ENCODE measurements at regions of chr3 and their contacts with region 1.

Region 1: DNA sequence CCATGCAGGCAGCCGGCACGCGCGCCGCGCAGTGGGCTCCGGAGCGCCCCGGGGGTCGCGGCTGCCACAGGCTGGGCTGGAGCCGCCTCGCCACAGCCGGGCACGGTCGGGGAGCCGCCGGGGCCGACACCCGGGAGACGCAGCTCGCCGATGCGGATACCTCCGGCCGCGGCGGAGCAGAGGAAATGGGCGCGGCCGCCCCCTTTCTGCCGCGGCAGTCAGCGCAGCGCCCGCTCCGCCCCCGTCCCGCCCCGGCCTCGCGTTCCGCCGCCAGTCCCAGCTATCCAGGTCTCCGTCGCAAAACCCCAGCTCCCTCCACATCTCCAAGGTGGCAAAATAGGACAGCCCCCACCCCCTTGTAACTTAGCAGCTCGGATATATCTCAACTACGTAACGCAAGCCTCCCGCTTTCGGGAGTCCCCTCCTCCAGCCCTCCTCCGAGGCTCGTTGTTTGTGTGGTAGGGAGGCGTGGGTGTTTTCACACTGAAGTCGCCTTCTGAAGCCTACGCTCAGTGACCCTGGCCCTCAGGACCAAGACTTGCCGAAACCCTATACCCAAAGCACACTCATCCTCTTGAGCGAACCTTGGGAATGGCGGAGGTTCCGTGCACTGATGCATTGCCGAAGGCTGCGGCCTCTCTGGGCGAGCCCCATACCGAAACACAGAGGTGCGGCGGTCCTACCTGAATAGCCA is at the start of gene SH3BP5:
- DNase-seq: peak in 1 of 2 experiments; percentile 87
- H3K4me3 ChIP-seq: peak within 1 kb of the TSS; percentile 65 to 92 (median 84)
- H3K27ac ChIP-seq: no peak within 1 kb of the TSS; the same call in 1 of the 2 replicates
- H3K4me1 ChIP-seq: peaks cover 0 to 11% (median 9%) of the 10 kb centered on the region in 4 experiments; a peak in 6 of 7 replicates
- H3K27me3 ChIP-seq: peaks cover 1 to 20% (median 10%) of the 10 kb centered on the region in 4 experiments; a peak in 6 of 7 replicates
- CTCF ChIP-seq: peak; percentile 57 to 72 (median 63)
- EP300 ChIP-seq: no peak
- POLR2A ChIP-seq: no peak
- RAD21 ChIP-seq: peak; percentile 37 to 51
- total RNA-seq, gene SH3BP5: 9.4 and 9.7 TPM in 2 replicates

Region 2: DNA sequence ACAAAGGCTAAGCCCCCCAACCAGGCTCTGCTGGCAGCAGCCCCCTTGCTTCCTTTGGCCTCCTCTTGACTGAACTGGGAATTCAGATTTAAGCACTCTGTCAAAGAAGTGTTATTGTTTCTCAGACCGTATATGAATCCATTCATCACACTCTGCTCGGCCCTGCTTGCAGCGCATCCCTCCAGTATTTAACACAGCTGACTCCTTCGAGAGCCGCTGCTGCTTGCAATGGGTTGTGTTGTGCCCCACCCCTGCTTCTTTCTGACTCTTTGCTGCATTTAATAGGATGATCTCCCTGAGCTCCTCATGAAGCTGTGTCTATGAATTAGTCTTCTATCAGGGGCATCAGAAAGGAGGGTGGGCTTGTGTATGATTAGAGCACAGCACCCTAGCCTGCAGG is 626.5 kb before region 1 on chr3:
- CTCF ChIA-PET with region 1: no interaction called
- POLR2A ChIA-PET with region 1: no interaction called
- DNase-seq: peak in 1 of 2 experiments; percentile 32
- H3K4me3 ChIP-seq: no peak overlapping the region
- H3K27ac ChIP-seq: no peak overlapping the region
- H3K4me1 ChIP-seq: no peaks in the 10 kb centered on the region
- H3K27me3 ChIP-seq: no peaks in the 10 kb centered on the region
- CTCF ChIP-seq: no peak
- EP300 ChIP-seq: no peak
- POLR2A ChIP-seq: no peak
- RAD21 ChIP-seq: no peak

Region 3: DNA sequence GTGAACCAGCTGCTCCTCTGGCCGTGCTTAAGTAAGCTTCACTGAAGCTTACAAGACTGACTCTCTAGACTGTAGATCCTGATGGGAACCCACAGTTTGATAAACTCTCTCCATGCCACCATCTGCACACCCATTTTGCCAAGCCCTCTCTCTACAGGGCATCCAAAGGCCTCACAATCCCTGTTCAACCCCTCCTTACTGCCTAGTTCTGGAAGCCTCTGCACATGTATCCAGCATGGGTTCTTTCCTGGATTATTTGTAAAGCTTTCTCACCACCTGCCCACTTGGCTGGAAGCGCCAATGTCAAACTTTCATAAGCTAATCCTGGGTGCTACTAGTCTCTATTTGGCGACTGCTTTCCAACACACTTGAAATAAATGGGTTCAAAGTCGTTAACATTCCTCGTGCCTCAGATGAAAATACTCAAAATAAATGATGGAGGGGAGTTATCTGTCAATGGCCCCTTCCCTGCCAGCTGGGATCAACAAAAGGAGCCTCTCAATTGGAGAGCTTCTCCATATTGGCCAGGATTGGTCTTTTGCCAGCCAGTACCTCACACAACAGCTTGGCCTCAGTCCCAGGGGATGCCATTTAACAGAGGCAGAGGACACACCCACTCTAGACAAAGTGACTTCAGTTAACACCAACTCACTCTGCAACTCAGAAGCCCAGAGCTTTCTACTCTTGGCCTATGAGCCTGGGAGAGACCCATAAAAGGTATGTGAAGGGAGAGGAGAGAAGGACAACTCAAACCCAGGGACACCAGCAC is 48.2 kb before region 1 on chr3:
- CTCF ChIA-PET with region 1: interaction called, 10 read pairs
- POLR2A ChIA-PET with region 1: interaction called, 3 read pairs
- DNase-seq: no peak
- H3K4me3 ChIP-seq: no peak overlapping the region
- H3K27ac ChIP-seq: no peak overlapping the region
- H3K4me1 ChIP-seq: peaks cover 0 to 8% (median 3%) of the 10 kb centered on the region in 4 experiments; a peak in 4 of 7 replicates
- H3K27me3 ChIP-seq: no peaks in the 10 kb centered on the region
- CTCF ChIP-seq: no peak
- EP300 ChIP-seq: no peak
- POLR2A ChIP-seq: no peak
- RAD21 ChIP-seq: no peak

Region 4: DNA sequence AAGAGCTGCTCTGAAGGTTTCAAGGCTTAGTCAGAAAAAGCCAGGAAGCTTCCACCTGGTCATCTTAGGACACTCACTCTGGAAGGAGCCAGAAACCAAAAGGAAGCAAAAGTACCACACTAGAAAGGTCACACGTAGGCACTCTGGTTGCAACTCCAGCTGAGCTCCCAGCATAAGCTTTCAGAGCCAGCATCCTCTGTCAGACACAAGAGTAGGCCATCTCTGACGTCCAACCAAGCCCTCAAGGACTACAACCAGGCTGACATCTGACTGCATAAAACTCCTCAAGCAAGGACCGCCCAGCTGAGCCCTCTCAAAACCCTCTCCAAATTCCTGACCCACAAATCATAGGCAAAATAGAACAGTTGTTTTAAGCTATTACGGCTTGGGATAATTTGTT is 13.0 kb before region 1 on chr3:
- CTCF ChIA-PET with region 1: interaction called, 11 read pairs
- POLR2A ChIA-PET with region 1: interaction called, 5 read pairs
- DNase-seq: no peak
- H3K4me3 ChIP-seq: no peak overlapping the region
- H3K27ac ChIP-seq: no peak overlapping the region
- H3K4me1 ChIP-seq: peaks cover 0 to 2% (median under 1%) of the 10 kb centered on the region in 4 experiments; a peak in 1 of 7 replicates
- H3K27me3 ChIP-seq: no peaks in the 10 kb centered on the region
- CTCF ChIP-seq: no peak
- EP300 ChIP-seq: no peak
- POLR2A ChIP-seq: no peak
- RAD21 ChIP-seq: no peak

Region 5: DNA sequence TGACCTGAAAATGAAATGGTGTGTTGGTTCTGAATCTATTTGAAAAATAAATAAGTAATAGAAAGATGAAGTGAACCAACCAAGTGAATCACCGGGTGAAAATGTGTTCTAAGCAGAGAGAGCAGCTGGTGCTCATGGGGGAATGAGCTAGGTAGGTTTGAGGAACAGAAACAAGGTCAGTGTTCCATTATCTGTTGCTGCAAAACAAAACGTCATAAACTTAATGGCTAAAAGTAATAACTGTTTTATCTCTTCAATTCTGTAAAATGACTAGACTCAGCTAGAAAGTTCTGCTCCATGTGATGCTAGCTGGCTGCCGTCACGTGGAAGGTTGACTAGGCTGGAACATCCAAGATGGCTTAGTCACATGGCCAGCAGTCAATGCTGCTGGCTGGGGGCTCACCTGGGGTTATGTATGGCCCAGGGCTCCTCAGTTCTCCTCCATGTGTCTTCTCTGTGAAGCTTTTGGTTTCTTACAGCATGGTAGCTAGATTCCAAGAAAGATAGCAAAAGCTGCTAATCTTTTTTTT is 13.1 kb after region 1 on chr3:
- CTCF ChIA-PET with region 1: interaction called, 20 read pairs
- POLR2A ChIA-PET with region 1: interaction called, 4 read pairs
- DNase-seq: no peak
- H3K4me3 ChIP-seq: no peak overlapping the region
- H3K27ac ChIP-seq: no peak overlapping the region
- H3K4me1 ChIP-seq: no peaks in the 10 kb centered on the region
- H3K27me3 ChIP-seq: no peaks in the 10 kb centered on the region
- CTCF ChIP-seq: no peak
- EP300 ChIP-seq: no peak
- POLR2A ChIP-seq: no peak
- RAD21 ChIP-seq: no peak

Region 6: GRCh38 chr3:15356186-15356585 is 23.6 kb after region 1 on chr3:
- CTCF ChIA-PET with region 1: interaction called, 11 read pairs
- POLR2A ChIA-PET with region 1: interaction called, 4 read pairs
- DNase-seq: no peak
- H3K4me3 ChIP-seq: no peak overlapping the region
- H3K27ac ChIP-seq: 0 out of 2 replicates have a peak overlapping the region, but pooled peaks have one; percentile 53
- H3K4me1 ChIP-seq: peaks cover 0 to 6% (median 1%) of the 10 kb centered on the region in 4 experiments; a peak in 3 of 7 replicates
- H3K27me3 ChIP-seq: peaks cover 0 to 1% (median 0%) of the 10 kb centered on the region in 4 experiments; a peak in 1 of 7 replicates
- CTCF ChIP-seq: no peak
- EP300 ChIP-seq: no peak
- POLR2A ChIP-seq: no peak
- RAD21 ChIP-seq: no peak